ENCODE measurements at regions of chr18 and their contacts with region 1.

Region 1: GRCh38 chr18:11733031-11733430 is 44.0 kb downstream of the GNAL start:
- DNase-seq: peak; percentile 44 to 75
- ATAC-seq: peak; percentile 80 to 98
- H3K4me3 ChIP-seq: peak overlapping the region; percentile 0 to 48 (median 28)
- H3K27ac ChIP-seq: no peak overlapping the region
- H3K4me1 ChIP-seq: no peaks in the 10 kb centered on the region
- H3K27me3 ChIP-seq: peaks cover 0 to 5% (median 0%) of the 10 kb centered on the region in 3 donors
- CTCF ChIP-seq: peak; percentile 86 to 93 (median 90)
- POLR2A ChIP-seq: no peak

Region 2: GRCh38 chr18:11808001-11808855 is 75.2 kb after region 1 on chr18:
- in situ Hi-C with region 1: no loop called
- intact Hi-C with region 1: loop called (anchors 2 kb)
- DNase-seq: no peak
- ATAC-seq: no peak
- H3K4me3 ChIP-seq: no peak overlapping the region
- H3K27ac ChIP-seq: no peak overlapping the region
- H3K4me1 ChIP-seq: peaks cover 0 to 5% of the 10 kb centered on the region in 2 donors
- H3K27me3 ChIP-seq: no peaks in the 10 kb centered on the region
- CTCF ChIP-seq: no peak
- POLR2A ChIP-seq: no peak

Region 3: DNA sequence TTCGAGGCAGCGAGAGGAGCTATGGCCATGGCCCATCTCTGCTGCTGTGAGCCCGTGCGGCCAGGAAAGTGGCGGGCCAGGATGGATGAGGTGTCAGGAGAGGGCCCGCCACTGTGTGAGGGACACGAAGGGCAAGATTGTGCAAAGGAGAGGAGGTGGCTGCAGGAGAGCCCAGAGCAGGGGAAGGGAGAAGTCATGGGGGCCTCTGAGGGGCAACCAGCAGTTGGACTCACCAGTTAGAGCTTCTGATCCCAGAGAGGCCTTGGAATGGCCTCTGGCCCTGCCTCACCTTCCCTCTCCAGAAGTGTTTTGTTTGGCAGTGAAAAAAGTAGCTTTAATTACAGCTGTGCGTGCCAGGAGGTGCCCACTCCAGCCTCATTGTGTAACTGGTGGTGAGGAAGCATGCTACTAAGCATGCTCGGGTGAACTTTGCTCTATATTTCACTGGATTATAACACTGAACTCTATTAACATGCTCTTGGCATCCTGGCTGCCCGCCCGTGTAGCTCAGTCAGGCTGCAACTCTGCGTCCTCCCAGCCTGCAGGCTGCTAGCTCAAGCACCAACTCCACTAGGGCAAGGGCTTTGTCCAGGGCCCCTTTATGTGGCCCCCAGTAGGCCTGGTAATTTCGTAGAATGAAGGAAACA is 282.5 kb after region 1 on chr18:
- in situ Hi-C with region 1: loop called in 1 of 4 experiments (anchors 25 kb)
- intact Hi-C with region 1: no loop called
- DNase-seq: peak in 1 of 2 donors; percentile 76
- ATAC-seq: peak; percentile 77 to 89
- H3K4me3 ChIP-seq: no peak overlapping the region
- H3K27ac ChIP-seq: peak overlapping the region; percentile 59 to 78 (median 70)
- H3K4me1 ChIP-seq: peaks cover 28 to 39% of the 10 kb centered on the region in 2 donors
- H3K27me3 ChIP-seq: no peaks in the 10 kb centered on the region
- CTCF ChIP-seq: no peak
- POLR2A ChIP-seq: no peak

Measured in gastrocnemius medialis (tissue), 4 donors.